ENCODE measurements at regions of chr17 and their contacts with region 1.

Region 1: GRCh38 chr17:72985881-72986720 is 106.4 kb downstream of the SLC39A11 start:
- DNase-seq: peak; percentile 70 to 79
- H3K4me3 ChIP-seq: no peak overlapping the region
- H3K27ac ChIP-seq: no peak overlapping the region
- H3K4me1 ChIP-seq: peaks cover 3 to 8% of the 10 kb centered on the region in 2 donors
- H3K27me3 ChIP-seq: no peaks in the 10 kb centered on the region
- CTCF ChIP-seq: peak; percentile 62 to 89 (median 77)
- POLR2A ChIP-seq: no peak

Region 2: DNA sequence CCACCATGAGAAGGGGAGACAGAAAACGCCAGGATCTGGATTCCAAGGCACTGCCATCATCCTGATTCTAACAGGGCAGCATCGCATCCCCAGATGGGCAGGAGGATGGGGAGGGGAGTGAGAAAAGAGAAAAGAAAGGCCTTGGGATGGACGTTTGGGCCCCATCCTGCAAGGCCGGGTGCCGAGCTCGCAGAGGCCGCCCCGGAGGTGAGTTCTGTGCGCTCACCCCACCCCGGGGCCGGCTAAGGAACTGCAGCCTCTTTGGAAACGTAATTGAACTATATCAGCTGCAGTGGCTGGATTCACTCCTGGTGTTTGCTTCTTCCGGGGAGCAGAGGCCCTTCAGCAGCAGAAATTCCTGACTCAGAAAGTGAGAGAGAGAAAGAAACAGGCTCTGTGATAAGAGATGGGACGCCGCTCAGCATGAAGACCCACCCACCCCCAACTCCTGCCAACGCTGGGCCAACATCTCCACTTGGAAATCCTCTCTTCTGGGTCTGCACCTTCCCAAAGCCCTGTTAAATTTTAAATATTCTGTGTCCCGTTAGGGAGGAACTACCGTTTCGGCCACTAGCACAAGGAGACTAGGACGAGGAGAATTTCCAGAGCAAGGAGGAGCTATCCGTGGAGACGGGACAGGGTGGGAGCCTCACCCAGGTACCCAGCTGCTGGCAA is 170.2 kb after region 1 on chr17:
- intact Hi-C with region 1: loop called (anchors 10 kb)
- DNase-seq: peak; percentile 71 to 77
- H3K4me3 ChIP-seq: no peak overlapping the region
- H3K27ac ChIP-seq: no peak overlapping the region
- H3K4me1 ChIP-seq: peaks cover 0 to 14% of the 10 kb centered on the region in 2 donors
- H3K27me3 ChIP-seq: no peaks in the 10 kb centered on the region
- CTCF ChIP-seq: peak; percentile 47 to 85 (median 74)
- POLR2A ChIP-seq: no peak

Measured in thyroid gland (tissue), 4 donors.